ENCODE measurements at regions of chr17 and their contacts with region 1.

Region 1: DNA sequence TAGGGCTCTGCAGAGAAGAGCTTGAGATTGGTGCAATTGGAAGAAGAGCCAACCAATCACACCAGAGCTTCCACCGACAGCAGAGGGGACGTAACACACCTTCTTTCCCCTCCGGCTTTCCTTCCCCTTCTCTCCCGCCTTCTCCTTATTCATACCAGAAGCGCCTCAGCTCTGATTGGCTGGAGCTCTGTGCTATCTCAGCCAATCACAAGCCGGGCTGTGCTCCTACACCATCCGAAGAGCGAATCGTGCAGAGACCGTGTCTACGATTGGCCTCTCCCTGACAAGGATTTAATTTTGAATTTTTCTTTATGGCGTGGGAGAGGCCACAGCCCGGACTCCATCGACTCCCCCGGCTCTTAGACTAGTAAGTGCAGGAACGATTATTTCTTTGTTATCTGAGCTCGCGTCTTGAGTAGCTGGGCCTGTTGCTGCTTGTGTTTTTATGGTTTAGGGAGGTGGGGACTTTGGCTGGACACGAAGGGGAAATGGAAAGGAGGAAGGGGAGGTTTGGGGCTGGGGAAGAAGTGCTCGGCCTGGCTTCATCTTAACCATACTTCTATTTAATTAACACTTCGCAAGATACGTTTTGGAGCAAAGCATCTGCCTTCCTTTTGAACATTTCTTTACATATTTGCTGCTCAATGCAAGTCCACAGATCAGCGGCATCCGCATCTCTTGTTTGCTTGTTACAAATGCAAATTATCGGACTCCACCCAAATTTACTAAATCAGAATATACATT is at the start of gene PRR11:
- DNase-seq: no peak
- ATAC-seq: peak; percentile 81
- H3K4me3 ChIP-seq: peak within 1 kb of the TSS; percentile 79
- H3K27ac ChIP-seq: peak within 1 kb of the TSS; percentile 79
- H3K4me1 ChIP-seq: peaks cover 57% of the 10 kb centered on the region
- H3K27me3 ChIP-seq: no peaks in the 10 kb centered on the region
- CTCF ChIP-seq: no peak
- total RNA-seq, gene PRR11: 77.2 and 78.9 TPM in 2 replicates

Region 2: DNA sequence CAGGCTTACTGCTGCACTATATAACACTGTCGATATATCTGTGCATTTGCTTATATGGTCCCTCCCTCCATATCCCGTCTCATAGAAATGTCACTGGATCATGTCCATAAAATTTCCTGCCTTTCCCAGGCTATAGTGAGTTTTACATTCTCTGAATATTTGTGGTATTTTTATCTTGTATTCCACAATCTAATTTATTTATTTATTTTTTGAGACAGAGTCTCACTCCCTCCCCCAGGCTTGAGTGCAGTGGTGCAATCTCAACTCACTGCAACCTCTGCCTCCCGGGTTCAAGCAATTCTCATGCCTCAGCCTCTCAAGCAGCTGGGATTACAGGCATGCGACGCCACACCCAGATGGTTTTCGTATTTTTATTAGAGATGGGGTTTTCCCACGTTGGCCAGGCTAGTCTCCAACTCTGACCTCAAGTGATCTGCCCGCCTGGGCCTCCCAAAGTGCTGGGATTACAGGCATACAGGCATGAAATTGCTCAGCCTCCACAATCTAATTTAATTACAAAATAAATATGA is 61.8 kb before region 1 on chr17:
- CTCF ChIA-PET with region 1: no interaction called
- POLR2A ChIA-PET with region 1: interaction called, 8 read pairs
- intact Hi-C with region 1: loop called (anchors 5 kb)
- DNase-seq: peak; percentile 92
- ATAC-seq: peak; percentile 93
- H3K4me3 ChIP-seq: peak overlapping the region; percentile 39
- H3K27ac ChIP-seq: peak overlapping the region; percentile 70
- H3K4me1 ChIP-seq: peaks cover 30% of the 10 kb centered on the region
- H3K27me3 ChIP-seq: no peaks in the 10 kb centered on the region
- CTCF ChIP-seq: no peak

Region 3: DNA sequence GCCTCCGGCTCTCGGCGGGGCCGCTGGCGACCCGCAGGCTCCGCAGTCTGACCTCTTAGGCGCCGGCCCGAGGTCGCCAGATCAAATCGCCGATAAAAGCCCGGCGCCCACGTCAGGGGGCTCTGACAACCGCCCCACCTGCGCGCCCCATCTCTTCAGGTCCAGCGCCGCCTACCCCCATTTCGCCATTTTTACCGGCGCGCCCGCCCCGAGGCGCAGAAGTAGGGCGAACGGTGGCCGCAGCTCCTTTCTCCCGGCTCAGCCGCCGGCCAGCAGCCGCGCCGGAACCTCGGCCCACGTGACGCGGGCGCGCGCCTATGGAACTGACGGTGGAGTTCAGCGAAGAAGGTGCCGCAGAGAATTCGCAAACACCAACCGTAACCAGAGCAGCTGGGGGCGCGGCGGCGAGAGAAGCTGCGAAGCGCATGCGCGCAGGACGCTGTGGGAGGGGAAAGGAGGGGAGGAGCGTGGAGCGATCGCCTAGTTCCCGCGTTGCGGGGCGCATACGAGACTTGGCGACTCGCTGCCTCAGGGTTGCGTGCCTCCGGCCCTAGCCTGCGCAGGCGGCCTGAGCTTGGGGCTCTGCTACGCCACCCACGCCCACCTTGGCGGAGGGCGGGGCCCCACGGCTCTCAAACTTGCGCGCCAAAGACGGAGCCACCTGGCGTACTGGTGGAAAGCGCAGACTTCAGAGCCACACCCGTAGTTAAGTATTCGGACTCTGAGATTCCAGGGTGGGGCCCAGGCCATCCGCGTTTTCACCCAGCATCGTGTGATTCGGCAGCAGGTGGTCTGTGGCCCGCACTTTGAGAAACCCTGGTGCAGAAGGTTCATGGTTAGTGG is 48.9 kb before region 1 on chr17 and contains the start of gene TRIM37:
- CTCF ChIA-PET with region 1: interaction called, 3 read pairs
- POLR2A ChIA-PET with region 1: interaction called, 4 read pairs
- intact Hi-C with region 1: loop called (anchors 1 kb)
- DNase-seq: peak; percentile 100
- ATAC-seq: peak; percentile 96
- H3K4me3 ChIP-seq: peak within 1 kb of the TSS; percentile 87
- H3K27ac ChIP-seq: peak within 1 kb of the TSS; percentile 84
- H3K4me1 ChIP-seq: peaks cover 24% of the 10 kb centered on the region
- H3K27me3 ChIP-seq: no peaks in the 10 kb centered on the region
- CTCF ChIP-seq: peak; percentile 31
- total RNA-seq, gene TRIM37: 35.1 and 42.0 TPM in 2 replicates

Region 4: GRCh38 chr17:59139939-59140338 is 15.7 kb before region 1 on chr17:
- CTCF ChIA-PET with region 1: no interaction called
- POLR2A ChIA-PET with region 1: no interaction called
- intact Hi-C with region 1: no loop called
- DNase-seq: no peak
- ATAC-seq: no peak
- H3K4me3 ChIP-seq: no peak overlapping the region
- H3K27ac ChIP-seq: no peak overlapping the region
- H3K4me1 ChIP-seq: no peaks in the 10 kb centered on the region
- H3K27me3 ChIP-seq: no peaks in the 10 kb centered on the region
- CTCF ChIP-seq: no peak